ENCODE measurements at regions of chr2 and their contacts with region 1.

Region 1: GRCh38 chr2:235493775-235494715 is at the start of gene AGAP1:
- DNase-seq: peak; percentile 93
- H3K4me3 ChIP-seq: peak within 1 kb of the TSS; percentile 75
- H3K27ac ChIP-seq: peak within 1 kb of the TSS; percentile 73
- H3K4me1 ChIP-seq: peaks cover 15% of the 10 kb centered on the region
- H3K27me3 ChIP-seq: no peaks in the 10 kb centered on the region
- CTCF ChIP-seq: no peak
- total RNA-seq, gene AGAP1: 25.3 and 27.5 TPM in 2 replicates

Region 2: DNA sequence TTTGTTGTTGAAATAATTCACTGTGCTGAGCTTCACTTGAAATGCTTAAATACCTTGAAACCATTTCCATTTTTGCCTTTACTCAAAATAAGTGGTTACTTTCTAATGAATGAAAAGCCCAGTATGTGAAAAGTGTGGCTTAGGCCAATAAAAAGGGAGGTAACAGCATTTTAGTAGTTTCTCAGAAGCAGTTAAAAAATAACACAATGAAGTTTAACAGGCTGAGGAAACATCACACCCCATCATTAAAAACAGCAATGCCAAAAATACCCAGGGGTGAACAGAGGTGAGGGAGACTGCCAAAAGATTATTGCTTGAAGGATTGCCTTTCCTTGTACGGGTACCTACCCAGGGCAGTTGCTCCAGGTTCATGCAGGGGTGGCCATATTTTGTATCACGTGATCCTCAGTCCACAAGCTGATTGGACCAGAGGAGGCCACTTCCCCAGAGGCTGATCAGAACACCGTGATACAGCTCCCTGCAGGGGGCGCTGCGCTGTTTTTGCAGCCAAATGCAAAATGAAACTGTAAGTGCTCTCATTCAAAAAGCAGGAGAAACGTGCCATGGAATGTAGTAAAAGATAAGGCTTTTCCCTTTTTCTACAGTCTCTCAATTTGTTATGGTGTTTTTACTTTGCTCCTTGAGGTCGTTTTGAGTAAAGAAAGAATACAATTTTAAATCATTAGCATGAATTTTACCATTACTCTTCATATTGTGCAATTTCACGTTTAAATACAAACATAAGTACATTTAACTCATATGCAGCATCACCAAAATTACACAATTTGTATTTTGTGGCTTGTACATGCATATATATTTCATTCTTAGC is 612.4 kb before region 1 on chr2:
- CTCF ChIA-PET with region 1: no interaction called
- POLR2A ChIA-PET with region 1: no interaction called
- intact Hi-C with region 1: no loop called
- DNase-seq: peak; percentile 93
- H3K4me3 ChIP-seq: peak overlapping the region; percentile 18
- H3K27ac ChIP-seq: no peak overlapping the region
- H3K4me1 ChIP-seq: no peaks in the 10 kb centered on the region
- H3K27me3 ChIP-seq: no peaks in the 10 kb centered on the region
- CTCF ChIP-seq: peak; percentile 91

Region 3: GRCh38 chr2:235135990-235136561 is 358.0 kb before region 1 on chr2:
- CTCF ChIA-PET with region 1: no interaction called
- POLR2A ChIA-PET with region 1: no interaction called
- intact Hi-C with region 1: loop called (anchors 10 kb)
- DNase-seq: peak; percentile 70
- H3K4me3 ChIP-seq: no peak overlapping the region
- H3K27ac ChIP-seq: no peak overlapping the region
- H3K4me1 ChIP-seq: peaks cover 31% of the 10 kb centered on the region
- H3K27me3 ChIP-seq: no peaks in the 10 kb centered on the region
- CTCF ChIP-seq: peak; percentile 65

Region 4: GRCh38 chr2:235206980-235207579 is 287.0 kb before region 1 on chr2:
- CTCF ChIA-PET with region 1: no interaction called
- POLR2A ChIA-PET with region 1: no interaction called
- intact Hi-C with region 1: no loop called
- DNase-seq: no peak
- H3K4me3 ChIP-seq: no peak overlapping the region
- H3K27ac ChIP-seq: no peak overlapping the region
- H3K4me1 ChIP-seq: peaks cover 7% of the 10 kb centered on the region
- H3K27me3 ChIP-seq: no peaks in the 10 kb centered on the region
- CTCF ChIP-seq: no peak

Region 5: GRCh38 chr2:235287375-235287733 is 206.7 kb before region 1 on chr2:
- CTCF ChIA-PET with region 1: no interaction called
- POLR2A ChIA-PET with region 1: no interaction called
- intact Hi-C with region 1: no loop called
- DNase-seq: no peak
- H3K4me3 ChIP-seq: no peak overlapping the region
- H3K27ac ChIP-seq: no peak overlapping the region
- H3K4me1 ChIP-seq: peaks cover 17% of the 10 kb centered on the region
- H3K27me3 ChIP-seq: no peaks in the 10 kb centered on the region
- CTCF ChIP-seq: no peak

Measured in A673 (cell line).